Activated T-helper 2 cell treated with anti-CD3 and anti-CD28 coated beads, Interferon-gamma antibody, Interleukin-2, Interleukin-4, amounts not matched to agents 10 μg/mL and 5 μg/mL and 100 μg/mL, durations not matched to agents 14 hours and 24 hours and 36 hours (primary cell): ENCODE measurements at regions of chr2 and their contacts with region 1.

Region 1: DNA sequence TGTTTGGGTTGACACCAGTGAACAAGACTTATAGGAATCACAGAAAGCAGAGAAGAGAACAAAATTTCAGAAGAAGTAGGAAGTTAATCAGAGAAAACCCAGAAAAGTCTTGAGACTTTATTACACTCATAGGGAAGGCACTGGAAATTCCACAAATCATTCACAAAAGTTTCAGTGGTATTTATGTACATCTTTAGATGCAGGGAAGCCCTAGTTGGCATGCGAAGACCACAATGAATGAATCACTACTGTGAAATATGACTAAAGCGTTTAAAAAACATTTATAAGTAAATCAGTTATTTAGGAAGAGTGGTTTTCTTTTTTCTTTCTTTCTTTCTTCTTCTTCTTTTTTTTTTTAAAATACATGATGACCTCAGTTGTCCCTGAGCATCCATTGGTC is 105.1 kb downstream of the NUP35 start:
- DNase-seq: no peak
- H3K4me3 Mint-ChIP-seq: no peak overlapping the region
- H3K27ac Mint-ChIP-seq: peak overlapping the region; percentile 53
- H3K4me1 Mint-ChIP-seq: peaks cover 5% of the 10 kb centered on the region
- H3K27me3 Mint-ChIP-seq: no peaks in the 10 kb centered on the region

Region 2: DNA sequence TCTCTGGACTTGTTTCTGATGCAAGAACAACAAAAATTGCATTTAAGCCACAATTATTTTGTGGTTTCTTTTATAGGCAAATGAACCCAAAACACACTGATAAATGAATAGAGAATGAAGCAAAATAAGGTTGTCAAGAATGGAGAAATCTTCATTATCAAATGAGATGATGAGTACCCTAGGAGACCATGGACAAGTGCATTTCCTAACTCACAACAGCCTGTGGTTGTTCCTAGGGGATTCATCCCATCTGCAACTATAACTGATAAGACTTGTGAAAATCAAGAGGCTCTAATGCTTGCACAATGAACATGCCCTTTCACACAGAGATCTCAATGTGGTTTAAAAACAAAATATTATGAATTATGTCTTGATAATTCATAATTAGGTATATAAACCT is 962.5 kb before region 1 on chr2:
- intact Hi-C with region 1: no loop called
- DNase-seq: no peak
- H3K4me3 Mint-ChIP-seq: no peak overlapping the region
- H3K27ac Mint-ChIP-seq: no peak overlapping the region
- H3K4me1 Mint-ChIP-seq: no peaks in the 10 kb centered on the region
- H3K27me3 Mint-ChIP-seq: no peaks in the 10 kb centered on the region

Region 3: GRCh38 chr2:183214680-183215079 is 14.7 kb before region 1 on chr2:
- intact Hi-C with region 1: loop called (anchors 1 kb)
- DNase-seq: no peak
- H3K4me3 Mint-ChIP-seq: no peak overlapping the region
- H3K27ac Mint-ChIP-seq: no peak overlapping the region
- H3K4me1 Mint-ChIP-seq: peaks cover 28% of the 10 kb centered on the region
- H3K27me3 Mint-ChIP-seq: no peaks in the 10 kb centered on the region

Region 4: DNA sequence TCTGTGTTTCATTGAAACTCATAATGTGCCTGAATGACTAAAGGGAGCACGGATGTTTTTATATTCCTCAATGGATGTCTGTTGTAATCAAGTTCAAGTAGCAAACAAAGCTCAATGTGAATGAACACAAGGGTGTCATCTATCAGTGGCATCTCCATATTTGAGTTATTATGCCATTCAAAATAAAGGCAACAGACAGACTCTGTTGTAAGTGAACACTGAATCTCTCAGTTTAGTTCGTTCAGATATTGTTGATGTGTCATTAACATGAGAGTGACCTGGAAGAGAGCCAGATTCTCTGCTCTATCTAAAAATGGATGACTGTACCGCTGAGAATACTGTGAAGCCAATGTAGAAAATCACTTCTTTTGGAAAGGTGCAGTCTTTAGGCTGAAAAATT is 13.6 kb after region 1 on chr2:
- intact Hi-C with region 1: no loop called
- DNase-seq: no peak
- H3K4me3 Mint-ChIP-seq: no peak overlapping the region
- H3K27ac Mint-ChIP-seq: no peak overlapping the region
- H3K4me1 Mint-ChIP-seq: no peaks in the 10 kb centered on the region
- H3K27me3 Mint-ChIP-seq: peaks cover 3% of the 10 kb centered on the region